GM23248 (cell line): ENCODE measurements at regions of chr10 and their contacts with region 1.

Region 1: DNA sequence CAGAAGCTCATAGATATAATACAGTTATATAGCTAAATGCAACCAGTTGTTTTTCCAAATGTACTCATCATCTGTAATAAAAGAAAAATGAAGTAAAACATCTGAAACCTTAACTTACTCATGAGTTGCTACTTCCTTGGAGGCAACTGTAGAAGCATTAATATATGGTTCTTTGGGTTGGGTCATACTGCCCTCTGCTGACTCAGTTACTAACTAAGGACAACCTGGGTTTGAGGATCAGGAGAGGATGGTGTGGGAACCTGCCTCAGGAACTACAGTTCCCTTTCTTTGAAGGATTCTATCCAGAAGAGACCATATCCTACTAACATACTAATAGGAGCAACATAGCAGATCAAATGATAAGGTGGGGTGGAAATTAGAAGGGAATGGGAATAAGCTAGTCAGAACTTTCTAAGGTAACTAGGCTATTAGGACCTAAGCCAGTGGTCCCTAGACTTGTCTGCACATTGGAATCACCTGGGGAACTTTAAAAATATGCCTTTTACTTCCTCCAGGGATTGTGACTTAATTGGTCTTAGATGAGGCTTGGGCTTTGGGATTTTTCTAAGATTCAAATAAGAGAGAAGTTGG is 20.7 kb downstream of the COX15 start:
- DNase-seq: peak; percentile 87
- H3K4me3 ChIP-seq: no peak overlapping the region
- H3K27ac ChIP-seq: peak overlapping the region; percentile 72
- H3K4me1 ChIP-seq: peaks cover 33% of the 10 kb centered on the region
- H3K27me3 ChIP-seq: no peaks in the 10 kb centered on the region

Region 2: DNA sequence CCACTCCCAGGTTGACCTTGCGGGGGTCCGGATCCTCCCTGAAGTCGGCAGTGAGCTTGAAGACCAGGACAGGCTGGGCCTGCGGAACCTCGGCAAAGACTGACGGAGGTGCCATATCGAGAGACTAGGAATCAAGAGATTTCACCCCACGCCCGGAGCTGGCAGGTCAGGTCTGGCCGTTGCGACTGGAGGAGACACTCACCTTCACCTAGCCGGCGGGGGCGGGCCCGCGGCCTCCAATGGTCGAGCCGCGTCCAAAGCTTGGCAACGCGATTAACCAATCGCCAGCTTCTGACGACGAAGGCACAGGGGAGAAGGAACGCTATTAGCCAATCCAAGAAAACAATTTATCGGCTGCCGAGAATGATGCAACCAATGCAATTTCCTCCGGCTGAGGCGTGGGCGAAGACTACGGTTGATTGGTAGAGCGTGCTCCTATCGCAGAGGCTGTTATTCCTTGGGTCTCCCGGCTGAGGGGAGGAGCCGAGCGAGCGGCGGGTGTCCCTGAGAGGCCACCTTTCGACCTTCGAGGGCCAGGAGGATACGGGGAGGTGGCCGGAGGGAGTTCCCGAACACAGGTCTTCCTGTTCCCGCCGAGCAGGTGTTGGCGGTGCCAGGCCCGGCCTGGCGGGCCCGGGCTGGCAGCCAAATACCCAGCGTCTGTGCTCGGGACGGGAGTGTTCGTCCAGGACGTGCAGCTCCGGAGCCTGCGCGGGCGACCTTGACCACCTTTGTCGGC is 280.6 kb before region 1 on chr10 and contains the start of gene GOT1:
- in situ Hi-C with region 1: loop called (anchors 10 kb)
- DNase-seq: peak; percentile 99
- H3K4me3 ChIP-seq: peak within 1 kb of the TSS; percentile 100
- H3K27ac ChIP-seq: peak within 1 kb of the TSS; percentile 76
- H3K4me1 ChIP-seq: peaks cover 3% of the 10 kb centered on the region; the same call in 1 of the 2 replicates
- H3K27me3 ChIP-seq: no peaks in the 10 kb centered on the region
- total RNA-seq, gene GOT1: 19.1 and 39.6 TPM in 2 replicates

Region 3: DNA sequence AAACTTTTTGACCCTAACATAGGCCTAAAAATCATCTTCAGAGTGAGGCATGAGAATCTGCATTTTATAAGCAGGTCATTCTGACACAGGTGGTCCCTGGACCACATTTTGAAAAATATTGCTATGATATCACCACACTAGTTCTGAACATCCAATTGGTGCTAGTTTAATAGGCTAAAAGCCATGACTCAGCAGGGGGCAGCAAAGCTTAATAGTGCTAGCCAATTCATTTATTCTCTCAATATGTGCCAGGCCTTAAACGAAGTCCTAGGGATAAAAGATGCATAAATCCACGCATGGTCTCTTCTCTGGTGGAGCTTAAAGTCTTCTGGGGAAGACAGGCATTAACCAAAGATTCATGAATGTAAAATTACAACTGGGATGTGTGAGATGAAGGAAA is 80.8 kb before region 1 on chr10:
- in situ Hi-C with region 1: loop called (anchors 10 kb)
- DNase-seq: peak; percentile 81
- H3K4me3 ChIP-seq: no peak overlapping the region
- H3K27ac ChIP-seq: peak overlapping the region; percentile 57
- H3K4me1 ChIP-seq: peaks cover 13% of the 10 kb centered on the region
- H3K27me3 ChIP-seq: no peaks in the 10 kb centered on the region